Endothelial cell of umbilical vein (primary cell): ENCODE measurements at regions of chr7 and their contacts with region 1.

Region 1: DNA sequence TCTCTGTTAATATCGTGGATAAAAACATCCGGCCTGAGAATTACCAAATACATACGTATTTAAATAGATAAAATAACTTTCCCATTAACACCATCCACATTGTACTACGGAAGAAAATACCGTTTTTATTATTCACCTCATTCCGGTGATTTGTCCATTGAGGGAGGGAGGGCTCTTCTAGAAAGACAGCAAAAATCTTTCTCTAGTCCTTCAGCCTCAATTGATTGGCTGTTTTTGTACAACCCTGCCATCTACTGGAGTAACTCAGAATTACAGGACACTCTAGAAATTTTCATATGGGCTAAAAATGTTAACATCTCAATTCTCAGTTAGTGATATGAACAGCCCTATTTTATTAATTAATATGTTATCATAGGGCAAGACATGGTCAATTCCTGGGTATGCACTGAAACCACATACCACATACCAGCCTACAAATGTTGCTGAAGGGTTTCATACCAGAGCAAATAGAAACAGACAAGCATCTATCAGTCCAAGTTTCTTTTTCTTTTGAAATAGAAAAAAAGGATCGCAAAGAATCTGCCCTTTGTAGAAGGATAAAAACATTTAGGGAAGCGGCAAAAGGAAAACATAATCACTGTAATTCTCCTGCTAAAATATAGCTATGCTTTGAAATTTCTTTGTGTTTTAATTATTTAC is 55.8 kb upstream of the CDCA7L start:
- DNase-seq: peak; percentile 86
- H3K4me3 ChIP-seq: no peak overlapping the region
- H3K27ac ChIP-seq: peak overlapping the region; percentile 59
- H3K4me1 ChIP-seq: peaks cover 16% of the 10 kb centered on the region
- H3K27me3 ChIP-seq: no peaks in the 10 kb centered on the region
- CTCF ChIP-seq: peak; percentile 51 to 60
- POLR2A ChIP-seq: no peak

Region 2: GRCh38 chr7:20365486-20365885 is 1636.0 kb before region 1 on chr7:
- CTCF ChIA-PET with region 1: no interaction called
- POLR2A ChIA-PET with region 1: no interaction called
- dilution Hi-C with region 1: no loop called
- intact Hi-C with region 1: no loop called
- DNase-seq: no peak
- H3K4me3 ChIP-seq: no peak overlapping the region
- H3K27ac ChIP-seq: no peak overlapping the region
- H3K4me1 ChIP-seq: peaks cover 7% of the 10 kb centered on the region
- H3K27me3 ChIP-seq: no peaks in the 10 kb centered on the region
- CTCF ChIP-seq: no peak
- POLR2A ChIP-seq: no peak

Region 3: DNA sequence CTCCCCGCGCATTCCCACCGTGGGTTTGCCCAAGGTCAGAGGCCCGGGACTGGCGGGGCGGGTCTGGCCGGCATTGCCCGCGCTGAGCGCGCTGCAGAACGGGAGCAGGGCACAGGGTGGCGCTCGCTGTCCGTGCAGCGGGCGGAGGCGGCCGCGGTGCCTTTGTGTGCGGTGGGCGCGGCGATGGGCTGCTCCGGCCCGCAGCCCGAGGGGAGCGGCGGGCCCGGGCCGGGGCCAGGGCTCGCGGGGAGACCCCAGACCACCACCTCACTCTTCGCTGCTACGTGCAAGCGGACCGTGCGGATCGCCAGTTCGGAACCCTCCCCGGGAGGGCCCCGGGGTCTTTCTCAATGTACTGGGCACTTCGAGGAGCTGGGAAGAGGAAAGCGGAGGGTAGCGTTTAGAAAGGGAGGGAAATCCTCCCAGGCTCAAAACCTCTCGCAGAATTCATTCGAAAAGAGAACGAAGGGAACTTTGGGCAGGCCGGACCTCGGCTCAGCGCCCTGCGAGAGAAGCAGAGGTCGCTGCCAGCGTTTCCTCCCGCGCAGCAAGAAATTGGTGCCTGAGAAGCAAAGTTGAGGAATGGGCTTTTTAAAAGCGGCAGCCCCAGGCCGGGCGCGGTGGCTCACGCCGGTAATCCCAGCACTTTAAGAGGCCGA is 1223.3 kb before region 1 on chr7:
- CTCF ChIA-PET with region 1: no interaction called
- POLR2A ChIA-PET with region 1: no interaction called
- dilution Hi-C with region 1: no loop called
- intact Hi-C with region 1: loop called (anchors 1 kb)
- DNase-seq: peak; percentile 30
- H3K4me3 ChIP-seq: peak overlapping the region in 2 of 3 experiments; percentile 30 to 46
- H3K27ac ChIP-seq: no peak overlapping the region
- H3K4me1 ChIP-seq: peaks cover 5% of the 10 kb centered on the region
- H3K27me3 ChIP-seq: peaks cover 54 to 86% of the 10 kb centered on the region in 2 experiments
- CTCF ChIP-seq: peak; percentile 72 to 78
- POLR2A ChIP-seq: no peak

Region 4: DNA sequence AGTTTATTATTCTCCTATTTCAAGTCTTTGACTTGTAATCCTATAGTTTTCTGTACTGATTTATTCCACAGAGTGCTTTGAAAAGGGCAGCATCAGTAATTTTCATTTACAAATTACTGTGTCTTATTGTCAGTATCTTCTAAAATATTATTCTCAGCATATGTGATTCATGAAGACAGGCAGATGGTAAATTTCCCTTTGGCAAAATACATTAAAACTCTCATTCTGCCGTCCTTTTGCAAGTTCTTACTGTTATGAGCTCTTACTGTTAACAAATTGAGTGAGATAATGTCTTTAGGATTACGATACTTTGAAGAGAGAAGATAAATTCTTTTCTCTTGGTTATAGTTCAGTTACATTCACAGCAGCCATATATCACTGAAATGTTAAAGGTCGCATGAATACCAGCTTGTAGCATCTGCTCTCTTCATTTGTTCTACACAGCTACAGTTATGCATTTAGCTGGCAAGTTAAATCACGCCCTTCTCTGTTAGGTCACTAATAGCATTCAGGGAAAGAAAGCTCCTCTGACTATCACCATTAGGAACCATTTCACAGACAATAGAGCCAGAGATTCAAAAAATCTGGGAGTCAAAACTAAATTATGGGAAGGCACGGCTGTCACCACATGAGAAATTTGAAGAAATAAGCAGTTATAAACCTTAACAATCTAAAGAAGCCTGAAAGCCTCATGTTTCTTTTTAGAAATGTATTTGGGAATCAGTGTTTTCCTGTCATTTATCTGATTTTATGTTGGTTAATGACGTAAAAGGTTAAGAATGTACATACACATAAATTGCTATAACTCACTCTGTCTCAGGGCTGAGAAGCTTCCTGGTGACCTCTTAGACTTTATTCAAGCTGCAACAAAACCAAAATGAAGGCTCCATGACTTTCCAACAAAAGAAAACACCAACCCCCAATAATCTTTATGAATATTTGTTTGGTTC is 683.2 kb before region 1 on chr7:
- CTCF ChIA-PET with region 1: no interaction called
- POLR2A ChIA-PET with region 1: no interaction called
- dilution Hi-C with region 1: no loop called
- intact Hi-C with region 1: loop called (anchors 1 kb)
- DNase-seq: peak; percentile 89
- H3K4me3 ChIP-seq: peak overlapping the region in 1 of 3 experiments; percentile 19
- H3K27ac ChIP-seq: peak overlapping the region; percentile 96
- H3K4me1 ChIP-seq: peaks cover 44% of the 10 kb centered on the region
- H3K27me3 ChIP-seq: no peaks in the 10 kb centered on the region
- CTCF ChIP-seq: no peak
- POLR2A ChIP-seq: no peak

Region 5: DNA sequence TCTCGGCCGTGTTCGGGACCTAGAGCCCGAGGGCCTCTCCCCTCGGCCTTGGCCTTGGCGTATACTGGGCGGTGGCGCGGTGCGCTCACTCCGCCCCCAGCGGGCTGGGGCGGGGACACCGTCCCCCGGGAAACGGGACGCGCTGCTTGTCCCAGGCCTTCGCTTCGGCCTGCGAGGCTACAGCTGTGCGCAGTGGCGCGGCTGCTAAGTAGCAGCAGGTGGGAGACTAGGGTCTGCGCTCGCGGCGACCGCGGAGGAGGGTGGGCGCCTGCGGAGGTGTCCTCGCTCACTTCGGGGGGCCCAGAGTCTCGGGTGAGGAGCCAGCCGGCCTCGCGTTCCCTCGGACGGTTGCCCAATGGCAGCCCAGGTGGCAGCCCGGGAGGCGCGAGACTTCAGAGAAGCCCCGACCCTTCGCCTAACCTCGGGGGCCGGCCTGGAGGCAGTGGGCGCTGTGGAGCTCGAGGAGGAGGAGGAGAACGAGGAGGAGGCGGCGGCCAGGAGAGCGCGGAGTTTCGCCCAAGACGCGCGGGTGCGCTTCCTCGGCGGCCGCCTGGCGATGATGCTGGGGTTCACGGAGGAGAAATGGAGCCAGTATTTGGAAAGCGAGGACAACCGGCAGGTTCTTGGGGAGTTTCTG is 458.5 kb before region 1 on chr7 and contains the start of gene DNAH11:
- CTCF ChIA-PET with region 1: no interaction called
- POLR2A ChIA-PET with region 1: no interaction called
- dilution Hi-C with region 1: no loop called
- intact Hi-C with region 1: loop called (anchors 10 kb)
- DNase-seq: peak; percentile 23
- H3K4me3 ChIP-seq: peak within 1 kb of the TSS; percentile 43 to 56 (median 54)
- H3K27ac ChIP-seq: no peak within 1 kb of the TSS
- H3K4me1 ChIP-seq: peaks cover 13% of the 10 kb centered on the region
- H3K27me3 ChIP-seq: peaks cover 22 to 41% of the 10 kb centered on the region in 2 experiments
- CTCF ChIP-seq: peak in 1 of 2 donors; percentile 9
- POLR2A ChIP-seq: no peak
- total RNA-seq, gene DNAH11: 0.69 and 2.0 TPM in 2 replicates

Region 6: GRCh38 chr7:21767300-21767900 is 234.1 kb before region 1 on chr7:
- CTCF ChIA-PET with region 1: interaction called, 9 read pairs
- POLR2A ChIA-PET with region 1: no interaction called
- dilution Hi-C with region 1: no loop called
- intact Hi-C with region 1: loop called (anchors 5 kb)
- DNase-seq: peak; percentile 60
- H3K4me3 ChIP-seq: no peak overlapping the region
- H3K27ac ChIP-seq: no peak overlapping the region
- H3K4me1 ChIP-seq: no peaks in the 10 kb centered on the region
- H3K27me3 ChIP-seq: peaks cover 8% of the 10 kb centered on the region in 2 experiments
- CTCF ChIP-seq: peak; percentile 42 to 47
- POLR2A ChIP-seq: no peak

Region 7: DNA sequence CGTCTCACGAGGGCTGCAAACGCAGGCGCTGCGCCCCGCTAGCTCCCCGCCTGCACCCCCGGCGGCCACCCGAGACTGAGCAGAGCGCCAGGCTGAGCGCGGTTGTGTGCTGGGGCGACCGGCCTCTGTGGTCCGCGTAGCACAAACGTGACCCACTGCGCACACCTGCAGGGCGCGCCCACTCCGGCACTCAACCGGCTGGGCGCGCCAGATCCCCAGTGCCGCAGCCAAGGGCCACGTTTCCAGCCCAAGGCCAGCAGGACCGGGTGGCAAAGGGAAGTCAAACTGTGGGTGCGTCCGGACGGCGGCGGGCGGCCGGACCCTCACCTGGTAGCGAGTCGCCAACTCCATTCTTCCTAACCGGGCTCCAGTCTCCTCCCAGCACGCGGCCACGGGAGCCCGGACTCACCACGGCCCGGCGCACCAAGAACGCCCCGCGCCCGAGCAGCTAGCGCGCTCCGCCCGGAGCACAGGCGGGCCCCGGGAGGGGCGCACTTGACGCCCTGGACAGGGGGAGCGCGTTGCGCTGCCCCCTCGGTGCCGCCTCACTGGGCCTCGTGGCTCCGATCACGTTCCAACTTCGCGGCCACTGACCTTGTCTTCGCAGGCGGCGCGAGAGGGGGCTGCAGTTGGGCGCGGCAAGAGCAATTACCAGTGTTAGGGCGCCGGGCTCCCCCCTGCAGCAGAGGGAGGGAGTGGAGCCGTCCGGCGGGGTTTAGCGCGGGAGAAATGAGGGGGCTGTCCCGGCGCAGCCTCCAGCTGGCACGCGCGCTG is 55.8 kb before region 1 on chr7 and contains the start of gene CDCA7L:
- CTCF ChIA-PET with region 1: interaction called, 9 read pairs
- POLR2A ChIA-PET with region 1: interaction called, 3 read pairs
- dilution Hi-C with region 1: no loop called
- intact Hi-C with region 1: loop called (anchors 1 kb)
- DNase-seq: peak; percentile 82
- H3K4me3 ChIP-seq: peak within 1 kb of the TSS; percentile 59 to 91 (median 80)
- H3K27ac ChIP-seq: peak within 1 kb of the TSS; percentile 91
- H3K4me1 ChIP-seq: peaks cover 52% of the 10 kb centered on the region
- H3K27me3 ChIP-seq: no peaks in the 10 kb centered on the region
- CTCF ChIP-seq: no peak
- POLR2A ChIP-seq: peak; percentile 92
- total RNA-seq, gene CDCA7L: 91.6 and 93.7 TPM in 2 replicates

Region 8: DNA sequence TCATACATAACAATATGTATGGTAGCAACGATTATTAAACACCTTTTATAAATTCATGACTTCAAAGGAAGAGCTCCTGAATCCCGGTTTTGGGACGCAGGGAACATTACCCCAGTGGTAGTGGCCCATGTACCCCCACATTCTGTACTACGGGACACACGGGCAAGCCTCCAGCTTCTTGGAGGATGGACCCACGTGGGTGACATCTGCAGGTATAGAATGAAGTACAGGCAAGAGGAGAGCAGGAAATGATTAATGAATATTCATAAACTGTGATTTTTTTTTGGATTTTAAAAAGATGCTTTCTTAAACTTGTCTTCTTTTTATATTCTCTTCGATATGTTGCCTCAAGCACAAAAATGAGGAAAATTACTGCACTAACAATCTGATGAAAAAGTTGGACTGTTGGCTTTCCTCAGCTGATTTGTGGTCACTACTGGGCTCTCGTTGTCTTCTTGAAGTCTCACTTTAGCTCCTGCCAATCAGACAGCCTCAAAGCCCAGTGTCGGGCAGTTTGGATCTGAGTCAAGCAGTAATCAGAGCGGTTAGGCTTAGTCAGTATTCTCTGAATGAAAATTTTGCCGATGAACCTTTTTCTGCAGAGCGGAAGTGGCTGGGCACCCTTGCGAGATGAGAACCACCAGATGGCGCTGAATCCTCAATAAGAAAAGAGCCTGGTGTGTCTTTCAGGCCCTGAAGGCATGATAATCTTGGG is 101.9 kb after region 1 on chr7:
- CTCF ChIA-PET with region 1: no interaction called
- POLR2A ChIA-PET with region 1: no interaction called
- dilution Hi-C with region 1: no loop called
- intact Hi-C with region 1: no loop called
- DNase-seq: peak; percentile 73
- H3K4me3 ChIP-seq: no peak overlapping the region
- H3K27ac ChIP-seq: no peak overlapping the region
- H3K4me1 ChIP-seq: no peaks in the 10 kb centered on the region
- H3K27me3 ChIP-seq: peaks cover 17 to 21% of the 10 kb centered on the region in 2 experiments
- CTCF ChIP-seq: peak; percentile 72 to 78
- POLR2A ChIP-seq: no peak